Heart right ventricle (tissue), 16 donors: ENCODE measurements at regions of chr22 and their contacts with region 1.

Region 1: GRCh38 chr22:25534724-25535123 is 29.8 kb upstream of the GRK3 start:
- DNase-seq: no peak
- ATAC-seq: no peak
- H3K4me3 ChIP-seq: no peak overlapping the region
- H3K27ac ChIP-seq: no peak overlapping the region
- H3K4me1 ChIP-seq: peaks cover 0 to 11% (median 8%) of the 10 kb centered on the region in 9 donors
- H3K27me3 ChIP-seq: no peaks in the 10 kb centered on the region
- CTCF ChIP-seq: no peak

Region 2: GRCh38 chr22:25494774-25495173 is 40.0 kb before region 1 on chr22:
- intact Hi-C with region 1: loop called in 1 of 10 experiments (anchors 5 kb)
- DNase-seq: no peak
- ATAC-seq: no peak
- H3K4me3 ChIP-seq: no peak overlapping the region
- H3K27ac ChIP-seq: no peak overlapping the region
- H3K4me1 ChIP-seq: peaks cover 0 to 10% (median 3%) of the 10 kb centered on the region in 9 donors
- H3K27me3 ChIP-seq: peaks cover 0 to 7% (median 0%) of the 10 kb centered on the region in 7 donors
- CTCF ChIP-seq: no peak